ENCODE measurements at regions of chr17 and their contacts with region 1.

Region 1: DNA sequence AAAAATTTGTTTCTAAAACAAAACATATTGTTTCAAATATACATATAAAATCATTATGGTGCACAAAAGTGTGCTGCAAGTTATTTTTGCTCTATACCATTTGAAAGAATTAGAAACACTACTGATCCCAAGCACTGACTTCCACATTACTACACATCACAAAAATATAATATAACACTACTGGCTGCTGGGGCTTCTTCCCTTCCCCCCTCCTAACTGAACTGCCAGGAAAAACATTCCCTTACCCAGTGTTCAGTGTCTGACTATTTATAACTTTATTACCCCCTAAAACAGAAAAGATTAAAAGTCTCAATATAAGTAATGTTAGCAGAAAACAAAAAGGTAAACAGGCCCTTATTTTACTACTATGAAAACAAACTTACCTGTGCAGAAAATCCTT is 36.9 kb downstream of the GPATCH8 start:
- DNase-seq: no peak
- ATAC-seq: peak; percentile 46 to 67
- H3K4me3 ChIP-seq: peak overlapping the region in 2 of 4 donors; percentile 28 to 31
- H3K27ac ChIP-seq: peak overlapping the region; percentile 57 to 82 (median 81)
- H3K4me1 ChIP-seq: peaks cover 46 to 49% of the 10 kb centered on the region in 2 donors
- H3K27me3 ChIP-seq: no peaks in the 10 kb centered on the region
- CTCF ChIP-seq: no peak
- POLR2A ChIP-seq: no peak

Region 2: DNA sequence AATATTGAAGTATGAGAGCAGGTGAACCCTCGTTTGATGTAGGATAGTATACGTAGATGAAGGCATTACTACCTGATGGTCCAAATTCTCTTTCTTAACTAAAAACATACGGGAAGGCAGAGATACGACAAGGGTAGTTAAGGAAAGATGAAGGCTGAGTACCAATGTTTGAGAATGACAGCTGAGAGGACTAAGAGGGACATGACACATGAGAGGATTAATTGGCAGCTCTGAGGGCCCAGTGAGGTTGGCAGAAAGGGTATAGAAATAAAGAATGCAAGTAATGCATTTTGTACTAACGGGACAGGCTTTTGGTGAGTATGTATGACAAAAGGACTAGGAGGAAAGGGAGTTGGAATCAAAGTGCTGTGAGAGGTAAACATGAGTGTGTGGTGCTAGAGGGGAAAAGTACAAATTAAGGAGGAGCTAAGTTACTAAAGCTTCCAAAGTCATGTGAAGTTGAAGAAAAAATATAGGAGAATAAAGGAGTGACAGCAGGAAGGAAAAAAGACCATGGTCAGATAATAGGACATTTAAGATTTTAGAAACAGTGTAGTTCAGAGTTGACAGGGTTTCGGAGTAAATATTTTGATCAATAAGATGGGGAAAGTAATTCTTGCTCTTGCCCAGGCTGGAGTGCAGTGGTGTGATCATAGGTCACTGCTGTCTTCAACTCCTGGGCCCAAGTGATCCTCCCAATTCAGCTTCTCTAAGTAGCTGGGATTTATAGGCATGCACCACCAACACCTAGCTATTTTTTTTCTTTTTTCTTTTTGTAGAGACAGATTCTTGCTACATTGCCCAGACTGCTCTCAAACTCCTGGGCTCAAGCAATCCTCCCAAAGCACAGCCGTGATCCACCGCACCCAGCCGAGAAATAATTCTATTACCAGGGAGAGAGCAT is 33.8 kb before region 1 on chr17:
- in situ Hi-C with region 1: no loop called
- intact Hi-C with region 1: loop called (anchors 5 kb)
- DNase-seq: no peak
- ATAC-seq: peak; percentile 59 to 77
- H3K4me3 ChIP-seq: no peak overlapping the region
- H3K27ac ChIP-seq: peak overlapping the region; percentile 84 to 94 (median 89)
- H3K4me1 ChIP-seq: peaks cover 45 to 47% of the 10 kb centered on the region in 2 donors
- H3K27me3 ChIP-seq: no peaks in the 10 kb centered on the region
- CTCF ChIP-seq: no peak
- POLR2A ChIP-seq: no peak

Measured in gastrocnemius medialis (tissue), 4 donors.